ENCODE measurements at regions of chr6 and their contacts with region 1.

Region 1: GRCh38 chr6:43575772-43576551 is at the starts of genes POLH and XPO5:
- DNase-seq: peak; percentile 72
- H3K4me3 ChIP-seq: peak within 1 kb of the TSS; percentile 99
- H3K27ac ChIP-seq: peak within 1 kb of the TSS; percentile 70
- H3K27me3 ChIP-seq: no peaks in the 10 kb centered on the region
- CTCF ChIP-seq: peak; percentile 32
- polyA plus RNA-seq, gene POLH: 22.1 and 26.6 TPM in 2 replicates
- polyA plus RNA-seq, gene XPO5: 28.4 and 31.5 TPM in 2 replicates

Region 2: DNA sequence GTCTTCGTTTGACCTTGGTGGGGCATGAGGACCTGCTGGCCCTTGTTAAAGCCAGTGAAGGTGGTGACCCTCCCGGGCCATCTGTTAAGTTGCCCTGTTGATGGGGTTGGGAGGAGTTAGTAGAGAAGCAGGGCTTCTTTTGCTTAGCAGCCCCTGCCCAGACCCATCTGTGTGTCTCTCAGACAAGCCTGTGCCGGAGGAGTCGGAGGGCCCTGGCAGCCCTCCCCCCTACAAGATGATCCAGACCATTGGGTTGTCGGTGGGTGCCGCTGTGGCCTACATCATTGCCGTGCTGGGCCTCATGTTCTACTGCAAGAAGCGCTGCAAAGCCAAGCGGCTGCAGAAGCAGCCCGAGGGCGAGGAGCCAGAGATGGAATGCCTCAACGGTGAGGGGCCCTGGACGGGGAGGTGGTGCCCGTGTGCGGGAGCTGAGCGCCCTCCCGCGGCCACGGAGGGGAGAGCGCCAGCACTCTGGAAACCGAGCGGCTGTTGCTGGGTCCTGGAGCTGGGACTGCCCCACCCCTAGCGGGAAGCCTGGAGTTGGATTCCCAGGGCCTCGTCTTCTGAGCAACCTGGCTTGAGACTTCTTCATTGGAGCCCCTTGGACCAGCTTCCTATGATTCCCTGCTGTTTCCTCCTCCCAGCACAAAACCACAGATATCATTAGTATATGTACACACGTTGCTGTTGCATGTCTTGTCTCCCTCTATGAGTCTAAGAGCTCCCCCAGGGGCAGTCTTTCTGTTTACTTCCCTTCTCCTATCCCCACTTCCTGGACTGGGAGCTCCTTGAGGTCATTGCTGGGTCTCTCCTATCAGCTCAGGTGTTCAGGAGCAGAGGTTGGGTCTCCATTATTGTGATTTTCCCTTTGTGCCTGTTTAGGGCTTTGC is 432.5 kb before region 1 on chr6:
- CTCF ChIA-PET with region 1: no interaction called
- POLR2A ChIA-PET with region 1: no interaction called
- DNase-seq: peak; percentile 86
- H3K4me3 ChIP-seq: no peak overlapping the region
- H3K27ac ChIP-seq: peak overlapping the region; percentile 31
- H3K27me3 ChIP-seq: no peaks in the 10 kb centered on the region
- CTCF ChIP-seq: peak; percentile 95

Region 3: GRCh38 chr6:43532201-43532600 is 43.8 kb before region 1 on chr6:
- CTCF ChIA-PET with region 1: no interaction called
- POLR2A ChIA-PET with region 1: interaction called, 11 read pairs
- DNase-seq: no peak
- H3K4me3 ChIP-seq: no peak overlapping the region
- H3K27ac ChIP-seq: no peak overlapping the region
- H3K27me3 ChIP-seq: no peaks in the 10 kb centered on the region
- CTCF ChIP-seq: no peak

Region 4: GRCh38 chr6:43593938-43594337 is 18.0 kb after region 1 on chr6:
- CTCF ChIA-PET with region 1: no interaction called
- POLR2A ChIA-PET with region 1: no interaction called
- DNase-seq: no peak
- H3K4me3 ChIP-seq: no peak overlapping the region
- H3K27ac ChIP-seq: no peak overlapping the region
- H3K27me3 ChIP-seq: no peaks in the 10 kb centered on the region
- CTCF ChIP-seq: no peak

Region 5: DNA sequence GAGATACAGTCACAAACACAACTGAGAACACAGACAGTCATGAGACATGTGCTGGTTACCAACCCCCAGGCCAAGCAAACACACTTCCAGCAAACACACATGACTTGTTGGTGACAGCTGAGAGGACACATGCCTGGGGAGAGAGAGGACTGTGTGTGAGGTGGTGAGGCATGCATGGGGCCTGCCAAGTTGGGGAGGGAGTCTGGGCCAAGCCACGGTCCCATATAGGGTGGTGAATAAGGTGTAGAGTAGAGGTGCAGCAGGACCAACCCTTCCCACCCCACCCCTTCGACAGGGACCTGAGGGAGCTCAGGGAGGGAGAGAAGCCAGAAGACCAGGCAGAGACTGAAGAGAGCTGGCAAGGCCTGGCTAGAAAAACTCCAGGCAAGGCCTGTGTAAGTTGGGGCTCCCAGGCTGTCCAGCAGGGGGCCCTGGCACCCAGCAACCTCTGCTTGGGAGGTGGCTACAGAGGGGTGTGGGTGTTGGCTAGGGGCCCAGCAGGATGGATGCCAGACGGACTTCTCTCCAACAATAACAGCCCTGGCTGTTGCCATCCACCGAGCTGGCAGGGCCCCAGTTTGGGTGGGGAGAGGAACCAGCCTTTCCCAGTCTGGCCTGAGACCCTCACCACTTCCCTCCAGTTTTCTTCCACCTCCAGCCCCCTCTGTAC is 645.5 kb after region 1 on chr6:
- CTCF ChIA-PET with region 1: interaction called, 14 read pairs
- POLR2A ChIA-PET with region 1: no interaction called
- DNase-seq: no peak
- H3K4me3 ChIP-seq: no peak overlapping the region
- H3K27ac ChIP-seq: no peak overlapping the region
- H3K27me3 ChIP-seq: no peaks in the 10 kb centered on the region
- CTCF ChIP-seq: peak; percentile 71